HepG2 (cell line): ENCODE measurements at regions of chr12 and their contacts with region 1.

Region 1: GRCh38 chr12:86275356-86275755 is 19.2 kb upstream of the MGAT4C start:
- DNase-seq: no peak
- ATAC-seq: no peak
- H3K4me3 ChIP-seq: no peak overlapping the region
- H3K27ac ChIP-seq: no peak overlapping the region
- H3K4me1 ChIP-seq: no peaks in the 10 kb centered on the region
- H3K27me3 ChIP-seq: no peaks in the 10 kb centered on the region
- CTCF ChIP-seq: no peak
- EP300 ChIP-seq: no peak
- POLR2A ChIP-seq: no peak
- RAD21 ChIP-seq: no peak

Region 2: DNA sequence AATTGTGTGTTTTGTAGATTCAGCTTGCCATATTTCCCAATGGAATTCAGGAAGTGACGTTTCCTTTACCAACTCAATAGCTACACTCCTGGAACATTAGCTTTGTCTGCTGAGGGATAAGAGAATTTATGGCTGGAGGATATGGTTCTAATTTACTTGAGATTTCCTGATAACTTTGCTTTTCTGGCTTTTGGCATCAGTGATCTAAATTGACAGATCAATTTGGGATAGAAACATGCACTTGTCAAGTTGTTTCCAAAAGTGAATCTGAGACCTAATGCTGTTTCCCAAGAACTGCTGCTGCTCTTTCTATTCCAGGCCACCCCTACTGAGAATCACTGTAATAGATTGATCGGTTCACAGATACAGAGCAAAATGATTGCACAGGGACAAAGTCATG is 62.3 kb before region 1 on chr12:
- CTCF ChIA-PET with region 1: no interaction called
- POLR2A ChIA-PET with region 1: no interaction called
- in situ Hi-C with region 1: no loop called
- intact Hi-C with region 1: no loop called
- DNase-seq: no peak
- ATAC-seq: no peak
- H3K4me3 ChIP-seq: no peak overlapping the region
- H3K27ac ChIP-seq: no peak overlapping the region
- H3K4me1 ChIP-seq: no peaks in the 10 kb centered on the region
- H3K27me3 ChIP-seq: no peaks in the 10 kb centered on the region
- CTCF ChIP-seq: no peak
- EP300 ChIP-seq: no peak
- POLR2A ChIP-seq: no peak
- RAD21 ChIP-seq: no peak

Region 3: DNA sequence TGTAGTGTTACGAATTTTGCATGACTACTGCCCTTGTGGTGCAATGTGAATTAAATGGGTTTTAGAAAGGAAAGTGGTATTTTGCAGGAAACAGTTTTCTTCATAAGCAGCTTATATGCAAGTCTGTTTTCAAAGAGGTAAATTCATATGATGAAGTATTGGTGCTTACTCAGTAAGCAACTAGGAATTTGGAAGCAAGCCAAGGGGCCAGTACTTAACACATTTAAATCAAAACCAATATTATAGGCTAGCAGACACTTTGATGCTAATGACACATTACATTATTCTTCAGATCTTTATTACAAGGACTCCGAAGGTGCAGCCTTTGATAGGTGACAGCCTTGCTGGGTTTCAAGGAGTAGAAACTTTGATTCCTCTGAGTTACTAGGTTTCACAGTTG is 42.2 kb before region 1 on chr12:
- CTCF ChIA-PET with region 1: no interaction called
- POLR2A ChIA-PET with region 1: no interaction called
- in situ Hi-C with region 1: no loop called
- intact Hi-C with region 1: loop called (anchors 2 kb)
- DNase-seq: no peak
- ATAC-seq: no peak
- H3K4me3 ChIP-seq: no peak overlapping the region
- H3K27ac ChIP-seq: no peak overlapping the region
- H3K4me1 ChIP-seq: no peaks in the 10 kb centered on the region
- H3K27me3 ChIP-seq: no peaks in the 10 kb centered on the region
- CTCF ChIP-seq: no peak
- EP300 ChIP-seq: no peak
- POLR2A ChIP-seq: no peak
- RAD21 ChIP-seq: no peak

Region 4: DNA sequence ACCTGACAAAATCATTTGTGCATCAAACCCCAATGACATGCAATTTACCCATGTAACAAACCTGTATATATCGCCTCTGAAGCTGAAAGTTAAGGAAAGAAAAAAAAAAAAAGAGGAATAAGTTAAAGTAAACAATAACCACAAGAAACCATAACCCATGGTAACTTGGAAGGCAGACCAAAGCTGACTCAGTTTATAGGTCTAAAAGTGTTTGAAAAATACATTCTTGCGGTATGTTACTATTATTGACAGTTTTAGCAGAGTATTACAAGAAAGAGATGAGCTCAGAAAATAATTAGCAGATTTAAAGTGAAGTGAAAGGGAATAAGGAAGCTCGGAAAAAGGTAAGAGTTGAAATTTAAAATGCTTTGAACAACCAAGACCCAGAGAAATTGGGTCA is 15.3 kb after region 1 on chr12:
- CTCF ChIA-PET with region 1: no interaction called
- POLR2A ChIA-PET with region 1: no interaction called
- in situ Hi-C with region 1: no loop called
- intact Hi-C with region 1: no loop called
- DNase-seq: no peak
- ATAC-seq: no peak
- H3K4me3 ChIP-seq: no peak overlapping the region
- H3K27ac ChIP-seq: no peak overlapping the region
- H3K4me1 ChIP-seq: no peaks in the 10 kb centered on the region
- H3K27me3 ChIP-seq: no peaks in the 10 kb centered on the region
- CTCF ChIP-seq: no peak
- EP300 ChIP-seq: no peak
- POLR2A ChIP-seq: no peak
- RAD21 ChIP-seq: no peak

Region 5: DNA sequence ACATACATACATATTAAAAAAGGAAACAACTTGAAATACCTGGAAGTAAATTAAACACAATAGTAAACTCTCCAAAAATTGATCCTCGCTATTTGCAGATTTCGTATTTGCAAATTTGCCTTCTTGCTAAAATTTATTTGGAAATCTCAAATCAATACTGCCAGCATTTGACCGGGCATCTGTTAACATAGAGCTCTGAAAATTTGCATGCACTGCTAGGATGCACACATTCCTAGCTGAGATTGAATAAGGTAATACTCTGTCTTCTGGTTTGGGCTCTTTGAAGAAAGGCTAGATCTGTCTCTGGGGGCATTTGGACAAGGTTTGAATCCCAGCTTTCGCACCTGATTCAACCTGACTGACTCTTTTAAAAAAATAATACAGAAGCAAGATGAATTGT is 709.9 kb after region 1 on chr12:
- CTCF ChIA-PET with region 1: no interaction called
- POLR2A ChIA-PET with region 1: no interaction called
- in situ Hi-C with region 1: no loop called
- intact Hi-C with region 1: no loop called
- DNase-seq: no peak
- ATAC-seq: no peak
- H3K4me3 ChIP-seq: no peak overlapping the region
- H3K27ac ChIP-seq: no peak overlapping the region
- H3K4me1 ChIP-seq: no peaks in the 10 kb centered on the region
- H3K27me3 ChIP-seq: no peaks in the 10 kb centered on the region
- CTCF ChIP-seq: no peak
- EP300 ChIP-seq: no peak
- POLR2A ChIP-seq: no peak
- RAD21 ChIP-seq: no peak